ENCODE measurements at regions of chr15 and their contacts with region 1.

Region 1: GRCh38 chr15:35648941-35649340 is 103.0 kb upstream of the DPH6 start:
- DNase-seq: no peak

Region 2: GRCh38 chr15:34610354-34610753 is 1038.6 kb before region 1 on chr15:
- intact Hi-C with region 1: no loop called
- DNase-seq: no peak

Region 3: GRCh38 chr15:34879107-34879506 is 769.8 kb before region 1 on chr15:
- intact Hi-C with region 1: loop called in 1 of 2 experiments (anchors 5 kb)
- DNase-seq: no peak

Measured in posterior vena cava (tissue), 2 donors.